Head of caudate nucleus (tissue), 42 donors: ENCODE measurements at regions of chr14 and their contacts with region 1.

Region 1: GRCh38 chr14:56569174-56569573 is 10.4 kb upstream of the TMEM260 start:
- DNase-seq: no peak

Region 2: DNA sequence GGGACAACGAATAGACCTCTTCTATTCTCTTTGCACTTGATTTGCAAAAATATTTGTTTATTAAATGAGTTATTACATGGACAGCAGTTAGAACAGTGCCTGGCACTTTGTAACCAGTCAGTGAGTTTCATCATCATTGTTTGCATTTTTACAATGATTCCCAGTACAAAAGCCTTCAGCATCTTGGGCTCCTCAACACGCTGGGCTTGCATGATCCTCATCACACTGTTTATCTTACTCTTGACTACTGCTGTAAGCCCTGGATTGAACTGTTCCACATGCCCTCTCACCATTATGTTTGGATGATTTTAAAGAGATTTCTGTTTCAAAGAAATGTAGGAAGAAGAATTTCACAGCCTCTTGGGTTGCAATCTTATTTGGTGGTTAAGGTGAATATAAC is 246.6 kb before region 1 on chr14:
- intact Hi-C with region 1: no loop called
- DNase-seq: no peak

Region 3: DNA sequence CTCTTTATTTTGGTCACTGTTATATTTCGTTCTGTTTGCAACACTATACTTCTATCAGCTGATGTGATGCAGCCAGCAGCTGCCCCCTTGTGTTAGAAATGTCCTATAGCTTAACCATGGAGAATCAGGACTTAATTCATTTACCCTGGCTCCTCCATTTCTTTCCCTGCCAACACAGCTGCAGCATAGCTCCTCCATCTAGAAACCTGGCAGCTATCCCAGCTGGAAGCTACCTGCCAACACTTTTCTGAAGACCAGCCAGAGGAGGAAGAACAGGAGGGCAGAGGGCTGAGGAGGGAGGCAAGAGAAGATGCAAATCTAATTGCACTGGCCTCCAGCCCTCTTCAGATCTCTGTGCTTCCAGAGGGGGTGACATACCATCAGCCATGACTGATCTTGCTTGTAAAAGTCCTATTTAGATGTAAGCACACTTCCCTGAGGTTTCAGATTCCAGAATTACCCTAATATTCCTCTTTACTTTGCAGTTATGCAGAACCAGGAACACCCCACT is 146.4 kb before region 1 on chr14:
- intact Hi-C with region 1: loop called (anchors 5 kb)
- DNase-seq: peak in 33 of 42 donors; percentile 5 to 62 (median 31)

Region 4: DNA sequence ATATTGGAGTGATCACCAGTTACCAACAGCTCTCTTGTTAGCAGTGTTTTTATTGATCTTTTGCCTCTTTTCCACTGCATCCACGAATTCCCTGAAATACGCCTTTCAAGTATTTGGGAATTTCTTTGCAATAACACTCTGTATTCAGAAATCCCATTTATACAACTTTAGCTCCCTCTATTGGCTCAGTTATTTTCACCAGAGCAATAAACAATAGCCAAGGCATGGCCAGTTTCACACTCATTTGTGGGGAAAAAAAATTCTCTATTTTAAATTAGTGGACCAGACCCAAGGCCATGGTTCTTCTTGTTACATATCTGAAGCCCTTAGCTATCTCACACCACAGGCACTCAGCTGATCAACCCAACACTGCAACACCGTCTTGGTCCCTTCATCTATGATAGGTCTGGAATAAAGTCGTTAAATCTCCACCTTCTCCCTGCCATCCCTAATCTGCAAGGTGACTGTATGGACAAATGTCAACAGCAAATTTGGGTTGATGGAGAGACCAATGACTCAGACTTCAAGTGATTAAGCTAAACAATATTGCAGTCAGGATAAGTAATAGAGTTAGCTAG is 82.0 kb before region 1 on chr14:
- intact Hi-C with region 1: no loop called
- DNase-seq: peak in 1 of 42 donors; percentile 4

Region 5: GRCh38 chr14:56552615-56553014 is 16.6 kb before region 1 on chr14:
- intact Hi-C with region 1: no loop called
- DNase-seq: no peak

Region 6: GRCh38 chr14:56808383-56809269 is 239.5 kb after region 1 on chr14:
- intact Hi-C with region 1: no loop called
- DNase-seq: no peak